Upper lobe of right lung (tissue), 1 donor: ENCODE measurements at regions of chr2 and their contacts with region 1.

Region 1: DNA sequence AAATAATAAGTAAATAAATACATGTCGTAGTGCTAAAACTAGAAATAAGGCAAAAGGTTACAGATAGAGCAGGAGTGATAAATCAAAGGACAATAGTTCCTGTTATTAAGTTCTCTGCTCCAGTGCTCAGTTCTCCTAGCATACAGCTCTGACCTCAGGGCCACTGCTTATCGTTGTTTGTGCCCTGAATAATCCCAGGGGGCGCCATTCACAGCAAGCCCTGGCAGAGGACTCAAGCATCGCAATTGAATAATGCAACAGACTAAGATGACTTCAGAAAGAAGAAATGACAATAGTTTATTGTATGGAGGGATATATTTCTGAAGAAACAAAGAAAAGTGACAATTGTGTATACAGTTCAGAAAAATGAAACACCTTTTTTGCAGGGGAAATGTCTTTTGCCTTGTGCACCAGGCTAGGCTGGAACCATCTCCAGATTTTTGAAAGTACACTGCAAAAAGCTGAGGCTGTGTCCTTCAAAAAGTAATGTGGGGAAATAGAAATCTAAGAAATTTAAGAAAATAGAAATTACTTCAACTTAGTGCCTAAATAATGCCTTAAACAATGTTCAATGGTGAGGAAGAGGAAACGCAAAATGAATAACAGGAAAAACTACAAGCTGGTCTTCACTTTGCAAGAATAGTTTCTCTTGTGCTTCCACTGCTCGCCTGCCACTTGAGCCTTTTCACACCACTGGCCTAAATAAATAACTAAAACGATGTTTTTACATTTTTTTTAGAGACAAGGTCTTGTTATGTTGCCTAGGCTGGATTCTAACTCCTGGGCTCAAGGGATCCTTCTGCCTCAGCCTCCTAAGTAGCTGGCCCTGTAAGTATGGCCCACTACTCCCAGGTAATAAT is 19.0 kb upstream of the CCNYL1 start:
- DNase-seq: peak; percentile 73
- ATAC-seq: peak; percentile 95
- H3K4me3 ChIP-seq: no peak overlapping the region
- H3K27ac ChIP-seq: no peak overlapping the region
- H3K4me1 ChIP-seq: peaks cover 3% of the 10 kb centered on the region
- H3K27me3 ChIP-seq: no peaks in the 10 kb centered on the region
- CTCF ChIP-seq: peak; percentile 61

Region 2: DNA sequence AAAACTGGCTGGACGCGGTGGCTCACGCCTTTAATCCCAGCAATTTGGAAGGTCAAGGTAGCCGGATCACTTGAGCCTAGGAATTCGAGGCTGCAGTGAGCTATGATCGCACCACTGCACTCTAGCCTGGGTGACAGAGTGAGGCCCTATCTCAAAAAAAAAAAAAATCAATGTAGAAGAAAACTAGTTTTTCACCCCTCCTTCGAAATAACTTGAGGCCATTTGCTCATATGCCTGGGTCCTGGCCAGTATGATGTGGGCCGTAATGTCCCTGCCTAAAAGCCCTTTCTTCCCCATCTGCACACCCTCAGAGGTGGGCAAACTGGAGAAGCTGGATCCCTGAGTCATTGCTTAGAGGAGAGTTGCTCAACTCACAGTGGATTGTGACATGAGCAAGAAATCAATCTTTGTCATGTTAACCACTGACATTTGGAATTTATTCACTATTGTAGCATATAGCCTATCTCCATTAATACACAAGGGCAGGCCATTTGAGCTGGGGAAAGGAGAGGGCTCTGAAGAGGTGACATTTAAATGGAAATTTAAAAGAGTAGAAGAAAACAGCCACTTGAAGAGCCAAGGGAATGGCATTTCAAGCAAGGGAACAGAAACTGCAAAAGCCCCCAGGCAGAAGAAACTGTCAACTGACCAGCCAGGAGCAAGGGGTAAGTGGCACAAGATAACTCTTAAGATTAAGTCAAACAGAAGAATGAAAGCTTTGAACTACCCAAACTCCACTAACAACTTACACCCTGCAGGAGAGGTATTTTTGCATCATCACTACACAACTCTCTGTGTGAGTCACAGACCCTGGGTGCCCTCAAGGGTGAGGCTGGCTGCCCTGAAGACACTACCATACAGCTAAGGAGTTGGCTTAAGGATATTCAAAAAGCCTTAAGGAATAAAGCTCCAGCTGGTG is 59.6 kb before region 1 on chr2:
- intact Hi-C with region 1: loop called (anchors 10 kb)
- DNase-seq: no peak
- ATAC-seq: peak; percentile 85
- H3K4me3 ChIP-seq: no peak overlapping the region
- H3K27ac ChIP-seq: no peak overlapping the region
- H3K4me1 ChIP-seq: no peaks in the 10 kb centered on the region
- H3K27me3 ChIP-seq: no peaks in the 10 kb centered on the region
- CTCF ChIP-seq: no peak

Region 3: GRCh38 chr2:207807516-207807915 is 115.1 kb after region 1 on chr2:
- intact Hi-C with region 1: no loop called
- DNase-seq: no peak
- ATAC-seq: no peak
- H3K4me3 ChIP-seq: no peak overlapping the region
- H3K27ac ChIP-seq: no peak overlapping the region
- H3K4me1 ChIP-seq: peaks cover 15% of the 10 kb centered on the region
- H3K27me3 ChIP-seq: no peaks in the 10 kb centered on the region
- CTCF ChIP-seq: no peak